ENCODE measurements at regions of chr6 and their contacts with region 1.

Region 1: DNA sequence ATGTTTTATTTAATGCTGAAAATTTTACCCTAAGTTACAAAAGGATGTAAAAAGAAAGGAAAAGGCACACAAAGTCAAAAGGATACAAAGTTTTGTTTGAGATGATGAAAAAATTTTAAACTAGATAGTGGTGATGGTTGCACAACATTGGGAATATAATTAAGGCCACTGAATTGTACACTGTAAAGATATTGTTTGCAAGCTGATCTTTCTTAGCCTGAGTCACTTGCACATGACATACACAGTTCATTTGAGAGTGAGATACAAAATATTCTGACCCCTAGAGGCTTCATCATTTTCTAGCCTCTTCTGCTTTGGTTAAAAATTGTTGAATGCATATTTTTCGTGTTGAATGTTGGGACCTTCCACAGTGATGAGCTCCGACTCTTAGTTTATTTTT is 462.6 kb downstream of the HDGFL1 start:
- DNase-seq: no peak
- H3K4me3 ChIP-seq: no peak overlapping the region
- H3K27ac ChIP-seq: no peak overlapping the region
- H3K4me1 ChIP-seq: no peaks in the 10 kb centered on the region
- H3K27me3 ChIP-seq: no peaks in the 10 kb centered on the region
- CTCF ChIP-seq: no peak
- POLR2A ChIP-seq: no peak

Region 2: GRCh38 chr6:21742238-21742660 is 1289.7 kb before region 1 on chr6:
- intact Hi-C with region 1: no loop called
- DNase-seq: no peak
- H3K4me3 ChIP-seq: peak overlapping the region in 1 of 3 donors; percentile 5
- H3K27ac ChIP-seq: peak overlapping the region; percentile 64 to 81
- H3K4me1 ChIP-seq: no peaks in the 10 kb centered on the region
- H3K27me3 ChIP-seq: no peaks in the 10 kb centered on the region
- CTCF ChIP-seq: no peak
- POLR2A ChIP-seq: no peak

Region 3: DNA sequence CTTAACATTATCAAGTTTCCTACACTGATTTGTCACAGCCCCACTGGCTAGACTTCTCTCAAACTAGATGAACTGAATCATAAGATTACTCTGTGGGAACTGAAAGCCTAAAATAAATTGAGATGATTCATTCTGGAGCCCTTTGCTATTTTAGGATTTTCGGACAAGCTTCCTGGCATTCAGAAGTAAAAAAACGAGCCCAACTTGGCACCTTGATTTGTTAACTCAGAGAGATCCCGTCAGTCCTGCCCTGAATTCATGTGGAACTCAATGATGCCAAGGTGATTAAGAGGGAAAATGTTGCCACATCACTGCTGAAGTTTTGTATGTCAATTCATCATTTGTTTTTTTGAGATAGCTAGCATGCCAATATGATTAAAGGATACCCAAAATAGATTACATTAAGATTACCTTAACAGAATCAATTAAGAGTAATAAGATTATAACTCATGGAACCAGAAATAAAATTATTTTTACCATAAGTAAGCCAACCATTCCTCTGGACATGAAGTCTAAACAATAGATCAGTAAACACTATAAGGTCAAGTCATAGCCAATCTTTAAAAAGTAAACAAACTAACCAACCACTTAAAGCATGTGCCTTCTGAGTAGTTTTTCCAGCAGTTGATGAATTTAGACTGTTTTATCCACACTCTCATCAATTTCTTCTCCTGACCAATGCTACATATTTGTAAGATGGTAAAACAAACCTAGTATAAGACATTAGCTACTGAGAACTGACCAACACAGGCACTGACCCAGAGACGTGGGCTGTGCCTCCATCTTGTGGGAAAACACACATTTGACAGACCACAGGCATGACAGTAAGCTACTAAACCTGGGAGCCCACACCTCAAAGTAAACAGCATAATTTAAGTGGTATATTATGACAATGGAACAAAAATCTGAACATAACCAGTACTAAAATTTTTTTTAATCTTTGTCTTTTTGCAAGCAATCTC is 972.4 kb after region 1 on chr6:
- intact Hi-C with region 1: loop called (anchors 5 kb)
- DNase-seq: no peak
- H3K4me3 ChIP-seq: no peak overlapping the region
- H3K27ac ChIP-seq: no peak overlapping the region
- H3K4me1 ChIP-seq: no peaks in the 10 kb centered on the region
- H3K27me3 ChIP-seq: no peaks in the 10 kb centered on the region
- CTCF ChIP-seq: no peak
- POLR2A ChIP-seq: no peak